ENCODE measurements at regions of chr11 and their contacts with region 1.

Region 1: GRCh38 chr11:128085276-128085675 is 502.1 kb downstream of the ETS1 start:
- DNase-seq: no peak

Region 2: GRCh38 chr11:128061281-128061871 is 23.9 kb before region 1 on chr11:
- intact Hi-C with region 1: loop called (anchors 1 kb)
- DNase-seq: no peak

Measured in posterior cingulate gyrus (tissue), 11 donors.